SK-N-SH (cell line): ENCODE measurements at regions of chr18 and their contacts with region 1.

Region 1: DNA sequence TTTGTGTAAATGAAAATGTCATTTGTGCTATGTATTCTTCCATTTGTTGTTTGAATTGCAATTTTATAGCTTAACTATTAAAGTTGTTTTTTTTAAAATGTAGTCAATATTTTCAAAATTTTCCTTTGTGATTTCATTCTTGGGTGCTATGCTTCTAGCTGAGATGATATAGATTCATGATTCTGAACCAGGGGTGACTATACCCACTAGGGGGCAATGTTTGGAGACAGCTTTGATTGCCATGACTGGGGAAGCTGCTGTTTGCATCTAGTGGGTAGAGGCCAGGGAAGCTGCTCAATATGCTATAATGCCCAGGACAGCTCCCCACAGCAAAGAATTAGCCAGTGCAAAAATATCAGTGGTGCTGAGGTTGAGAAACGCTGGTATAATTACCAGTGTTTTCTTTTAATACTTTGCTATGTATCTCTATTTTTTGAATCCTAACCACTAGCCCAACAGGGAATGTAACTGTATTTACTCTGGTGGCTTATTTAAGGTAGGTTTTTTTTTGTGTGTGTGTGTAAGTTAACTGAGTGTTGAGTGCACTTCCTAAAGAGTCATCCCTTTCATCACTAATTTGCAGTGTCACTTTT is 99.7 kb downstream of the MEP1B start:
- DNase-seq: peak; percentile 70
- H3K4me3 ChIP-seq: no peak overlapping the region
- H3K27ac ChIP-seq: no peak overlapping the region
- H3K4me1 ChIP-seq: no peaks in the 10 kb centered on the region
- H3K27me3 ChIP-seq: no peaks in the 10 kb centered on the region
- CTCF ChIP-seq: peak; percentile 88
- EP300 ChIP-seq: no peak
- RAD21 ChIP-seq: peak; percentile 81

Region 2: GRCh38 chr18:32018331-32019250 is 271.0 kb before region 1 on chr18 and contains the start of gene RNF125:
- CTCF ChIA-PET with region 1: no interaction called
- POLR2A ChIA-PET with region 1: no interaction called
- DNase-seq: peak; percentile 84
- H3K4me3 ChIP-seq: peak within 1 kb of the TSS; percentile 45 to 60
- H3K27ac ChIP-seq: no peak within 1 kb of the TSS
- H3K4me1 ChIP-seq: peaks cover 0 to 13% of the 10 kb centered on the region in 2 experiments; a peak in 1 of 4 replicates
- H3K27me3 ChIP-seq: peaks cover 24% of the 10 kb centered on the region; the same call in 1 of the 2 replicates
- CTCF ChIP-seq: no peak
- EP300 ChIP-seq: no peak
- RAD21 ChIP-seq: no peak
- polyA plus RNA-seq, gene RNF125: 0.05 and 0.06 TPM in 2 replicates

Region 3: GRCh38 chr18:32158108-32158624 is 131.4 kb before region 1 on chr18:
- CTCF ChIA-PET with region 1: interaction called, 15 read pairs
- POLR2A ChIA-PET with region 1: no interaction called
- DNase-seq: peak; percentile 76
- H3K4me3 ChIP-seq: peak overlapping the region in 1 of 2 experiments; percentile 45; a peak in 1 of 4 replicates
- H3K27ac ChIP-seq: no peak overlapping the region
- H3K4me1 ChIP-seq: no peaks in the 10 kb centered on the region; a peak in 1 of 4 replicates
- H3K27me3 ChIP-seq: no peaks in the 10 kb centered on the region
- CTCF ChIP-seq: peak; percentile 84
- EP300 ChIP-seq: no peak
- RAD21 ChIP-seq: peak; percentile 99

Region 4: DNA sequence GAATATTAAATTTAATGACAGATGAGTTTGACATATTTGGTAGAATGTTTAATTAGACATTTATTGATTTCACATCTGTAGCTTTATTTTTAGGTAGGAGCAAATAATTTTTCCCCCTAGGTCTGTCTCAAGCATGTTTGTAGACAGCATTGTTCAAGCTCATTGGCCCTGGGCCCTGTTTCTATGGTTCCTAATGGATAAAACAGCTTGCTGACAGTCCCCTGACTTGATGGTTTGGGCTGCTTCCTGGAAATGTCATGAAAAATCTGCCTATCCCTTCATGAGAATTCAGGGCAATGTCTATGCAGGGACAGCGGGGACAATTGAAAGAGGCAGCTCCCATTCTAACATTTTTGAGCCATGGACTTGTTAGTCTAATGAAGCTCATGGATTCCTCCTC is 114.3 kb before region 1 on chr18:
- CTCF ChIA-PET with region 1: no interaction called
- POLR2A ChIA-PET with region 1: no interaction called
- DNase-seq: no peak
- H3K4me3 ChIP-seq: no peak overlapping the region
- H3K27ac ChIP-seq: no peak overlapping the region
- H3K4me1 ChIP-seq: no peaks in the 10 kb centered on the region
- H3K27me3 ChIP-seq: no peaks in the 10 kb centered on the region
- CTCF ChIP-seq: no peak
- EP300 ChIP-seq: no peak
- RAD21 ChIP-seq: no peak

Region 5: GRCh38 chr18:32301976-32302743 is 12.6 kb after region 1 on chr18:
- CTCF ChIA-PET with region 1: interaction called, 15 read pairs
- POLR2A ChIA-PET with region 1: no interaction called
- DNase-seq: peak; percentile 26
- H3K4me3 ChIP-seq: no peak overlapping the region
- H3K27ac ChIP-seq: peak overlapping the region; percentile 72 to 86
- H3K4me1 ChIP-seq: peaks cover 19 to 25% of the 10 kb centered on the region in 2 experiments
- H3K27me3 ChIP-seq: no peaks in the 10 kb centered on the region
- CTCF ChIP-seq: no peak
- EP300 ChIP-seq: peak; percentile 74 to 80; a peak in 3 of 4 replicates
- RAD21 ChIP-seq: no peak; the same call in none of the 2 replicates

Region 6: DNA sequence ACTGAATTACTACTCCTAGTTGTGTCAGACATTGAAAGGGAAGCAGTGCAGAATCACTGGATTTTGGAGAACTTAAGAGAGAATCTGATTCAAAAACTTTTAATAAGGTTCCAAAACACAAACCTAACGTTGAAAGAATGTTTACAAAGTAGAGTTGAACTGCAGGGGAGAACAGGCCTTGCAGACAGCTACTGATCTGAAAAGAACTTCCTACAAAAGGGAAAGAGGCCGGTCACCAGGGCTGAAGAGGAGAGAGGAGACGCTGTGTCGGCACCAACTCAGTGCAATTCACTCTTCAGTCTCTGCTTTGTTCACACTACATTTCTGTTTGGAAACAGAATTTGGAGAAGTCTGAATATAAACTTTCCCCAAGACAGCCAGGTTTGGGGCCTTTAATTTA is 57.1 kb after region 1 on chr18:
- CTCF ChIA-PET with region 1: no interaction called
- POLR2A ChIA-PET with region 1: no interaction called
- DNase-seq: no peak
- H3K4me3 ChIP-seq: no peak overlapping the region
- H3K27ac ChIP-seq: no peak overlapping the region
- H3K4me1 ChIP-seq: peaks cover 0 to 19% of the 10 kb centered on the region in 2 experiments
- H3K27me3 ChIP-seq: no peaks in the 10 kb centered on the region
- CTCF ChIP-seq: no peak
- EP300 ChIP-seq: no peak
- RAD21 ChIP-seq: no peak

Region 7: DNA sequence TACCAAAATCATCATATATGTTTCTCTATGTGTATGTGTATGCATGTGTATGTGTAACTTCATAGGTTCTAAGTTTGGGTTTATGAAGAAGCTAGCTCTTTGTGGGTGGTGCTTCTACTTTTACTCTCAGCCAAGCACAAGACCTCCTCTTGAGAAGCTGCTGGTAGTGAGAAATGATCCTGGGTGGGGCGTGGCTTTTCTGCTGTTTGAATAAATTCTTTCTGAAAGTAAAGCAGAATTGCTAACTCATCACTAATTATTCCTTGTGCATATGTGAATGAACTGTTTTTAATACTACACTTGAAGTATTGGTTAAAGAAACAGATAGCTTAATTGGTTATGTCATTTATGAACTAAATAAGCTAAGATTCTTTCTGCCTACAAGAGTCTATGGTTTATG is 188.7 kb after region 1 on chr18:
- CTCF ChIA-PET with region 1: interaction called, 68 read pairs
- POLR2A ChIA-PET with region 1: no interaction called
- DNase-seq: no peak
- H3K4me3 ChIP-seq: no peak overlapping the region
- H3K27ac ChIP-seq: no peak overlapping the region
- H3K4me1 ChIP-seq: peaks cover 0 to 4% of the 10 kb centered on the region in 2 experiments; a peak in 2 of 4 replicates
- H3K27me3 ChIP-seq: no peaks in the 10 kb centered on the region; the same call in 1 of the 2 replicates
- CTCF ChIP-seq: no peak
- EP300 ChIP-seq: no peak
- RAD21 ChIP-seq: no peak